Naive thymus-derived CD4-positive, alpha-beta T cell (primary cell): ENCODE measurements at regions of chr12 and their contacts with region 1.

Region 1: DNA sequence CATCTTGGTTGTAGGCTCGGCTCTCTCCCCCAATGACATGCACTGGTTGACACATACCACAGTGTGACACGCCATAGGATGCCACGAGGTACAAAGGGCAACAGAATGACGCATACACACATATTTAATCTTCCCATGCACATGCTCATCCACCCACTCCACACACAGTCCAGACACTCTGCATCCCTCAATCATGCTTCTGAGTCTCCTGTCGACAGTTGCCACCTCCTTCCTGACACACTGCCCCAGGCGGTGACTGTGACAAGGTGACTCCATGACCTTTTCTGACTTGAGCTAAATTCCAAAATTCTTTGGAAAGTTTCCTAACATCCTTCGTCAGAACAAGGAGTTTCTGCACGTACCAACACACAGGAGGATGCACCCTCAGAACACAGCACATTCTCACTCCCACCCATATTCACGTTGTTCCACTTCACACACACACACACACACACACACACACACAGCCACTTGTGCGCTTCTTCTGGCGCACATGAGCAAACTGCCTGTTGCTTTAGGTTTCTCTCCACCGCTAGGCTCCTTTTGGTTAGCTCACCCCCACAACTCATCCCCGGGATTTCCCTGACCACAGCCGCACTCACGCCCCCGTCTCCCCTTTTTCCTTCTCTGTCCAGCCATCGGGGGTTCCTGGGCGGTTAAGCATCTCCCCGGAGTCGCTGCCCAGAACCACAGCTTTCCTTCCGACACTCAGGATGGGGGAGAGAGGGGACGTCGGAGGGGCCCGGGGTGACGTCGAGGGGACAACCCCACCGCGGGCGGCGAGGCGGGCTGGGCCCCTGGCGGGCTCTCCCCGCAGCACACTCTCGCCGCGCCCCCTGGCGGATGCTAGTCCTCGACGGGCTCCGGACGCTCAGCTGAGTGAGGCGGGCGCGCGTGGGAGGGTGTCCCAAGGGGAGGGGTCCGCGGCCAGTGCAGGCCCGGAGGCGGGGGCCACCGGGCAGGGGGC is 524 bp upstream of the WNT1 start:
- DNase-seq: peak; percentile 52 to 90 (median 75)
- ATAC-seq: peak; percentile 77
- H3K4me3 ChIP-seq: no peak overlapping the region
- H3K4me3 Mint-ChIP-seq: peak overlapping the region; percentile 24 to 85 (median 56)
- H3K27ac ChIP-seq: no peak overlapping the region
- H3K27ac Mint-ChIP-seq: peak overlapping the region in 7 of 9 donors; percentile 26 to 81 (median 61)
- H3K4me1 ChIP-seq: peaks cover 37% of the 10 kb centered on the region in 2 donors
- H3K4me1 Mint-ChIP-seq: peaks cover 28 to 53% (median 47%) of the 10 kb centered on the region in 7 donors
- H3K27me3 ChIP-seq: peaks cover 3 to 11% of the 10 kb centered on the region in 2 donors
- H3K27me3 Mint-ChIP-seq: peaks cover 18 to 92% (median 40%) of the 10 kb centered on the region in 5 donors

Region 2: GRCh38 chr12:48924617-48925303 is 52.8 kb before region 1 on chr12:
- CTCF ChIA-PET with region 1: interaction called, 4 read pairs
- POLR2A ChIA-PET with region 1: interaction called, 17 read pairs
- intact Hi-C with region 1: loop called in 1 of 2 experiments (anchors 1 kb)
- DNase-seq: peak; percentile 56 to 80 (median 77)
- ATAC-seq: peak; percentile 86
- H3K4me3 ChIP-seq: peak overlapping the region; percentile 72
- H3K4me3 Mint-ChIP-seq: peak overlapping the region; percentile 89 to 98 (median 93)
- H3K27ac ChIP-seq: peak overlapping the region; percentile 99
- H3K27ac Mint-ChIP-seq: peak overlapping the region; percentile 74 to 98 (median 95)
- H3K4me1 ChIP-seq: peaks cover 10 to 18% of the 10 kb centered on the region in 2 donors
- H3K4me1 Mint-ChIP-seq: peaks cover 18 to 52% (median 42%) of the 10 kb centered on the region in 7 donors
- H3K27me3 ChIP-seq: no peaks in the 10 kb centered on the region
- H3K27me3 Mint-ChIP-seq: no peaks in the 10 kb centered on the region

Region 3: DNA sequence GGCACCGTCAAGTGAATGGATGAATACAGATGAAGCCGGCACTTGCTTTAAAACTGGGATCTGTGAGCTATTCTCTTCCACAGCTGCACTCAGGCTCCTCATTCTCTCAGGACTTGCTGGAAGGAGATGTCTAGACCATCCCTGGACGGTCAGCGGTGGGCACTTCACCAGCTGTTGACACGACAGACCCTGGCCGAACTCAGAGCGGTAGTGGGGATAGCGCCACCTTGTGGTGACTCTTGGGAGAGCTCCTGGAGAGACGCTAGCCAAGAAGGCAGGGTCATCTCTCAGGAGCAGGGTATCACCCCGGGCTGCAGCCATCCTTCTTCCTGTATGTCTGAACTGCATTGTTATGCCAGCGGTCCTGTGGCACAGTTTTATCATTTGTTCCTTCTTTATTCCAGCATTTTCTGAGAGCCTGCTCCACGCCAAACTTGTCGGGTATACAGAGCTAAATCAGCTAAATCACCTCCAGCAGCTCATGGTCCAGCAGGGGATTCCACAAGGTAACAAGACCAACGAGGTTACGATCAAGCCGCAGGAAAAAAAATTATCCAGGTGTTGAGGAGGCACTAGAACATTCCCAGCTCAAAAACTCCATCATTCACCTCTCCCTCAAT is 10.5 kb after region 1 on chr12:
- CTCF ChIA-PET with region 1: interaction called, 36 read pairs
- POLR2A ChIA-PET with region 1: interaction called, 9 read pairs
- intact Hi-C with region 1: loop called in 1 of 2 experiments (anchors 1 kb)
- DNase-seq: peak in 8 of 9 donors; percentile 45 to 82 (median 60)
- ATAC-seq: peak; percentile 90
- H3K4me3 ChIP-seq: no peak overlapping the region
- H3K4me3 Mint-ChIP-seq: no peak overlapping the region
- H3K27ac ChIP-seq: no peak overlapping the region
- H3K27ac Mint-ChIP-seq: no peak overlapping the region
- H3K4me1 ChIP-seq: no peaks in the 10 kb centered on the region
- H3K4me1 Mint-ChIP-seq: peaks cover 0 to 12% (median 8%) of the 10 kb centered on the region in 7 donors
- H3K27me3 ChIP-seq: no peaks in the 10 kb centered on the region
- H3K27me3 Mint-ChIP-seq: peaks cover 21 to 79% (median 31%) of the 10 kb centered on the region in 5 donors

Region 4: DNA sequence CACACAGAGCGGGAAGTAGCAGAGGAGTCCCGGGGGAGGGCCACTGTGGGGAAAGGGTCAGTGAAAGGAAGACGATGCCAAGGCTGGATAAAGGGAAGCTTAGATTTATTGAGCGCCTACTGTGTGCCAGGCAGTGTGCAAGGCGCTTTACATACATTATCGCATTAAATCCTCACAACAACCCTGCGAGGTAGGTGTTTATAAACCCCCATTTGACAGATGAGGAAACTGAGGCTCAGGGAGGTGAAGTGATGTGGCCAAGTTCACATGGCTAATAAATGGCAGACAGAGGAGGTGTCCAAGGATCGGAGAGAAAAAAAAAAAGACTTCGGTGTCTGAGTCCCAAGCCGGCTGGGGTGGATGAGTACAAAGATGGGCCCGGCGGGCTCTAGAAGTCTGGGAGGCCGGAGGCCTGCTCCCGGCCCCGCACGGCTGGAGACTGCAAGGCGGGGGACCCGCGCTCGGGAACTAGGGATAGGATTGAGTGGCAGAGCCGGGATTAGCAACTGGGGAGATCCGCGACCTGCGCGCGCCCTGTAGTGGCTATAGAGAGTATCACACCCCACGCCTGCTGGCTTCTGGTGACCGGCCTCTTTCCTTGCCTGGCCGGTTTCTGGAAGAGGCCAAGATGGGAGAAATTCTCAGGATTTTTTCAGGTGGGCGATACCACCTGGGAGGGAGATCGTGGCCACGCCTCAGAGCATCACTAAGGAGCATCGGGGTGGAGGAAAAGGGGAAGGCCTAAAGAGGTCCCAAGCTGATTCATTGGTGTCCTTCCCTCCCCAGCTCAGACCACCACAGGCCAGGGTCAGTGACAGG is 17.7 kb after region 1 on chr12:
- CTCF ChIA-PET with region 1: interaction called, 4 read pairs
- POLR2A ChIA-PET with region 1: interaction called, 5 read pairs
- intact Hi-C with region 1: loop called (anchors 1 to 2 kb)
- DNase-seq: peak in 3 of 9 donors; percentile 36 to 56 (median 54)
- ATAC-seq: peak; percentile 51
- H3K4me3 ChIP-seq: no peak overlapping the region
- H3K4me3 Mint-ChIP-seq: peak overlapping the region in 9 of 10 donors; percentile 15 to 81 (median 71)
- H3K27ac ChIP-seq: no peak overlapping the region
- H3K27ac Mint-ChIP-seq: peak overlapping the region in 2 of 9 donors; percentile 31 to 90
- H3K4me1 ChIP-seq: peaks cover 13 to 26% of the 10 kb centered on the region in 2 donors
- H3K4me1 Mint-ChIP-seq: peaks cover 24 to 39% (median 32%) of the 10 kb centered on the region in 7 donors
- H3K27me3 ChIP-seq: peaks cover 0 to 25% of the 10 kb centered on the region in 2 donors
- H3K27me3 Mint-ChIP-seq: peaks cover 48 to 75% (median 56%) of the 10 kb centered on the region in 5 donors

Region 5: GRCh38 chr12:49336645-49337584 is 359.3 kb after region 1 on chr12 and contains the start of gene C1QL4:
- CTCF ChIA-PET with region 1: no interaction called
- POLR2A ChIA-PET with region 1: no interaction called
- intact Hi-C with region 1: loop called in 1 of 2 experiments (anchors 5 kb)
- DNase-seq: peak; percentile 73 to 96 (median 85)
- ATAC-seq: peak; percentile 98
- H3K4me3 ChIP-seq: peak within 1 kb of the TSS; percentile 46
- H3K4me3 Mint-ChIP-seq: peak within 1 kb of the TSS; percentile 31 to 77 (median 72)
- H3K27ac ChIP-seq: no peak within 1 kb of the TSS
- H3K27ac Mint-ChIP-seq: peak within 1 kb of the TSS in 1 of 9 donors; percentile 32
- H3K4me1 ChIP-seq: peaks cover 8 to 9% of the 10 kb centered on the region in 2 donors
- H3K4me1 Mint-ChIP-seq: peaks cover 16 to 39% (median 31%) of the 10 kb centered on the region in 7 donors
- H3K27me3 ChIP-seq: peaks cover 0 to 21% of the 10 kb centered on the region in 2 donors
- H3K27me3 Mint-ChIP-seq: peaks cover 64 to 93% (median 75%) of the 10 kb centered on the region in 5 donors
- total RNA-seq, gene C1QL4: not detected

Region 6: GRCh38 chr12:50597200-50598195 is 1619.9 kb after region 1 on chr12:
- CTCF ChIA-PET with region 1: no interaction called
- POLR2A ChIA-PET with region 1: no interaction called
- intact Hi-C with region 1: no loop called
- DNase-seq: peak in 8 of 9 donors; percentile 8 to 55 (median 33)
- ATAC-seq: peak; percentile 88
- H3K4me3 ChIP-seq: no peak overlapping the region
- H3K4me3 Mint-ChIP-seq: peak overlapping the region in 9 of 10 donors; percentile 26 to 76 (median 62)
- H3K27ac ChIP-seq: peak overlapping the region; percentile 36
- H3K27ac Mint-ChIP-seq: peak overlapping the region in 8 of 9 donors; percentile 16 to 80 (median 58)
- H3K4me1 ChIP-seq: peaks cover 0 to 7% of the 10 kb centered on the region in 2 donors
- H3K4me1 Mint-ChIP-seq: peaks cover 38 to 76% (median 58%) of the 10 kb centered on the region in 7 donors
- H3K27me3 ChIP-seq: no peaks in the 10 kb centered on the region
- H3K27me3 Mint-ChIP-seq: no peaks in the 10 kb centered on the region